ENCODE measurements at regions of chr11 and their contacts with region 1.

Region 1: GRCh38 chr11:57456960-57457642 is 3.2 kb upstream of the RTN4RL2 start:
- DNase-seq: peak; percentile 78

Region 2: DNA sequence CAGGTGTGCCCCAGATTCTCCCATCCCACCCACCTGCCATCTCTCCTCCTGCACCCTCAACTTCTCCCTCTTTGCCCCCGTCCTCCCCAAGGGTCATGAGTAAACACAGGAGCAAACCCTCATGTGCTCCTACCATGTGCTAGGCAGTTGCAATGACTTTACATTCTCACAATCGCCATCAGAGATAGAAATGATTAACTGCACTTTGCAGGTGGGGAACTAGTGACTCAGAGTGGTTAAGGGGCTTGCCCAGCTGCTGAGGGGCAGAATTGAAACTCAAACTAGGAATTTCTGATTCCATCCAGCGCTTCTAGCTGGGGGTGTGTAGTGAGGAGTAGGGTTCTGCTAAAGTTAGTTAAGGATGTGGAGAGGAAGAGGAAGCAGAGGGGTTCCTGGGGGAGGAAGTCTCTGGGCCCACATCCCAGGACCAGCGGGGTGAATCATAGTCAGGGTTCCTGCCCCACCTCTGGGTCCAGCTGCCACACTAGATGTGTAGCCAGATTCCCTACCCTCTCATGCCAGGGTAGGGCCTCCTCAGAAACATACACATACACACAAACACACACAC is 50.7 kb before region 1 on chr11:
- CTCF ChIA-PET with region 1: no interaction called
- POLR2A ChIA-PET with region 1: no interaction called
- DNase-seq: no peak

Region 3: GRCh38 chr11:57444362-57445121 is 12.6 kb before region 1 on chr11:
- CTCF ChIA-PET with region 1: interaction called, 20 read pairs
- POLR2A ChIA-PET with region 1: no interaction called
- DNase-seq: no peak

Region 4: DNA sequence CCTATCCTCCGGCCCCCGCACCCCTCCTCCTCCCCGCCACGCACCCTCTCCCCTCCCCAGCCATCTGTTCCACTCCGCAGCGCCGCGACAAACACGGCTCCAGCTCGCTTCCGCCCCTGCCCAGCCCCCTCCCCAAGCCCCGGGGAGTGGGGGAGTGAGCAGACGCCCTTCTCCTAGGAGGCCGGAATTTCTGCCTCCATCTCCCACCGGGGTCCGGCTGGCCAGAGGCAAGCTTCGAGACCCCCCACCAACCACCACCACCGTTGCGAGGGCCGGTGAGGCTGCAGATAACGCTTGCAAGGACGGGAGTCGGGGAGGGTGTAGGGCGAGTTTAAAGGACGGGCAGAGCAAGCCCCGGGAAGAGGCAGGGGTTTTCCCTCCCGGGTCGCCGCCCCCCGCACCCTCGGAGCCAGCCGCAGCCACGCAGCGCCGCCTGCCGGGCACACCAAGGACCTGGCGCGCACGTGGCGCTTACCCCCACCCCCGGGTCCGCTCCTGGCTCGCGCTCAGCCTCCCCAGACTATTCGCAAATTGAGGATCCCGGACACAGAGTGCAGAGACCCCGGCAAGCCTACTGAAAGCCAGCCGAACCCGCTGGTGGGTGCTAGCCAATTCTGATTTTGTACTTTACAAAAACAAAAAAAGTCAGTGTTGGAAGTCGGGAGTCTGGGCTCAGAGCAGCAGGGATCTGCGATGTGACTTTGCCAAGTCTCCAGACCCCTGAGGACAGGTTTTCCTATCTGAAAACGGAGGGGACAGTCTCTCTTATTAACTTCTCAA is 25.9 kb after region 1 on chr11:
- CTCF ChIA-PET with region 1: interaction called, 12 read pairs
- POLR2A ChIA-PET with region 1: interaction called, 6 read pairs
- DNase-seq: no peak

Region 5: GRCh38 chr11:57527056-57527631 is 70.0 kb after region 1 on chr11:
- CTCF ChIA-PET with region 1: interaction called, 24 read pairs
- POLR2A ChIA-PET with region 1: interaction called, 5 read pairs
- DNase-seq: peak; percentile 57